K562 (cell line): ENCODE measurements at regions of chr13 and their contacts with region 1.

Region 1: DNA sequence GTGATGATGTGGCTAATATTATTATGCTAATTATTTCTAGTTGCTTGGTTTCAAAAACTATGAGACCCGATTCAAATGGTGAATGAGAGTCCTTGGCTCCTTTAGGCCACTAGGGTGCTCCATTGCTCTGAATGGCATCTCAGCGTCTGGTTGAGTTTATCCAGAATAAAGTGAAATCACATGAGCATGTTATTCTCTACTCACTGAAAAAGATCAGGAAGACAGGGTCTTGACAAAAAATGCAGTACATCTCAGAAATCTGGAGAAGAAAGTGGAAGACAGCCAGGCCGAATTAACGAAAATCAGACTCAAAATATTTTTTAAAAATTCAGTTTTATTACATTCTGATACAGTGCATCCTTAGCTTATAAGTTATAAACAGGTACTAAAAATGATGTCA is 516.2 kb downstream of the MYO16 start:
- DNase-seq: peak; percentile 8 to 18 (median 14)
- ATAC-seq: peak; percentile 57; the same call in 1 of the 3 replicates
- H3K4me3 ChIP-seq: no peak overlapping the region
- H3K27ac ChIP-seq: no peak overlapping the region
- H3K4me1 ChIP-seq: no peaks in the 10 kb centered on the region
- H3K27me3 ChIP-seq: no peaks in the 10 kb centered on the region
- CTCF ChIP-seq: peak; percentile 33 to 41 (median 38); a peak in 4 of 6 replicates
- EP300 ChIP-seq: no peak
- POLR2A ChIP-seq: no peak
- RAD21 ChIP-seq: peak; percentile 10 to 47; a peak in 2 of 4 replicates

Region 2: DNA sequence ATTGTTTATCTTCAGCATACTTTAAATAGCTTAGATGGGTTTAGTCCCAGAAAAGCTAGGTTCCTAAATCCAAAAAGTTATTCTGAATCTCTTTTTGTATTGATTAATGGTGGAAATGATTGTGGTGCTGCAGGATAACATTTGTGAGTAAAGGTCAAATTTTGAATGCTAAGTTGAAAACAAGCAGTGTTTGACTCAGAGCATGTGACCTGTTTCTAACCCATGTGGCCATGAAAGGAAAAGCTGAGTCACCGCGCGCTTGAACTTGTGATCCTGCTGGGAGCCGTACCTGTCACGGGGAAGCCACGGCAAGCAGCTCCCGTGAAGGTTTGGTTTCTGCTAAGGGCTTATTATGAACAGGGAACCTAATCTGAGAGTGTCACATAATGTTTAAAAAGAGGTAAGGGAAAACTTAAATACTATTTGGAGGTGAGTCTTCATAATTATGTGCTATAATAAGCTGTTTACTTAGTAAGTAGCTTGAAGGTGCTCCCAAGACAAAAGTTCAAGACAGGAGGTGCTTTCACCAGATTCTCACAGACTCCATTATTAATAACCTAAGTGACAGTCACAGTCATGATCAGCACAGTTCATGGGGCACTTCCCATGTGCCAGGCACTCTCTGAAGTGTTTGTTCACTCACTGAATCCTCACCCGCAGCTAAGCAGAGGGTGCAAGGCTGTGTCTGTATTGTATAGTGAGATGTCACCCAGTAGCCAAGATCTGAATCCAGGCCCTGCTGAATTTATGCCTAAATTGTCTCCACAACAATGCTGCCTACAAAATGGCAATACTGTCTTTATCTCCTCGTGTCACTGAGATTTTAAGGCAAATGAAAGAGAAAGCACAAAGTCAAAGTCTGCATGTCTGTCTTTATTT is 229.8 kb before region 1 on chr13:
- CTCF ChIA-PET with region 1: no interaction called
- POLR2A ChIA-PET with region 1: no interaction called
- in situ Hi-C with region 1: no loop called
- intact Hi-C with region 1: no loop called
- DNase-seq: peak; percentile 51 to 89 (median 56)
- ATAC-seq: peak; percentile 97
- H3K4me3 ChIP-seq: no peak overlapping the region
- H3K27ac ChIP-seq: peak overlapping the region; percentile 84
- H3K4me1 ChIP-seq: peaks cover under 1 to 17% of the 10 kb centered on the region in 2 experiments; a peak in 3 of 5 replicates
- H3K27me3 ChIP-seq: no peaks in the 10 kb centered on the region
- CTCF ChIP-seq: no peak
- EP300 ChIP-seq: peak; percentile 39; the same call in 1 of the 2 replicates
- POLR2A ChIP-seq: no peak
- RAD21 ChIP-seq: no peak

Region 3: GRCh38 chr13:109113427-109113826 is 32.2 kb before region 1 on chr13:
- CTCF ChIA-PET with region 1: no interaction called
- POLR2A ChIA-PET with region 1: no interaction called
- in situ Hi-C with region 1: no loop called
- intact Hi-C with region 1: no loop called
- DNase-seq: no peak
- ATAC-seq: no peak
- H3K4me3 ChIP-seq: no peak overlapping the region
- H3K27ac ChIP-seq: no peak overlapping the region
- H3K4me1 ChIP-seq: no peaks in the 10 kb centered on the region
- H3K27me3 ChIP-seq: no peaks in the 10 kb centered on the region
- CTCF ChIP-seq: no peak
- EP300 ChIP-seq: no peak
- POLR2A ChIP-seq: no peak
- RAD21 ChIP-seq: no peak

Region 4: DNA sequence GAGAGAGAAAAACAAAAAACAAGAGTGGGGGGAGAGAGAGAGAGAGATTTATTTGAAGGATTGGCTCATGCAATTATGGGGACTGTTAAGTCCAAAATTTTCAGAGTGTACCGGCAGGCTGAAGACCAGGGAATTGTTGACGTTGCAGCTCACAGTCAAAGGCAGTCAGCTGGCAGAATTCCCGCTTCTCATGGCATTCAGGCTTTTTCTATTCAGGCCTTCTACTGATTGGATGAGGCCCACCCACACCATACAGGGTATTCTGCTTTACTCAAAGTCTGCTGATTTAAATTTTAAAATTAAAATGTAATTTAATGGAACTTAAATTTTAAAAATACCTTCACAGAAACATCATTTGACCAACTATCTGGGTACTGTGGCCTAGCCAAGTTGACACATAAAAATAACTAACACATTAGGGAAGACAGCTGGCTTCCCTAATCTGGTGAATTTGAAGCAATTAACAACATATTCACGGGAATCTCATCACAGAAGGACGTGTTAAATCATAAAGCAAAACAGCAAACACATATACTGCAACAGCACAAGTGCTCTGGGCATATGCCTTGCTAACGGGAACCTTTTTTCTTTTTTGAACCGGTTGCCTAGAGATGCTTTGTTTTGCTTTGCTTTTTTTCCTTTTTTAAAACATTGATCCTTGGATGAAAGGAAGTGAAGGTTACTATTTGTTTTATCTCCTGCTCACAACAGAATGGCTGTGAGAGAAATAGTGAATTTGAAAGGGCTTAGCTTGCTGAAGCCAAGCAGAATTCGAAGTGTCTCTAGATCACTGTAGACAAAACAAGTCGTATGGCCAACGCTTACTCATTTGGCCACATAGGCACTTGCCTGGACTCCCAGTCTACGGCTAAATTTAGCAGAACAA is 135.6 kb after region 1 on chr13:
- CTCF ChIA-PET with region 1: no interaction called
- POLR2A ChIA-PET with region 1: no interaction called
- in situ Hi-C with region 1: no loop called
- intact Hi-C with region 1: loop called (anchors 10 kb)
- DNase-seq: no peak
- ATAC-seq: no peak
- H3K4me3 ChIP-seq: no peak overlapping the region
- H3K27ac ChIP-seq: no peak overlapping the region
- H3K4me1 ChIP-seq: no peaks in the 10 kb centered on the region
- H3K27me3 ChIP-seq: no peaks in the 10 kb centered on the region
- CTCF ChIP-seq: no peak
- EP300 ChIP-seq: no peak
- POLR2A ChIP-seq: no peak
- RAD21 ChIP-seq: no peak

Region 5: DNA sequence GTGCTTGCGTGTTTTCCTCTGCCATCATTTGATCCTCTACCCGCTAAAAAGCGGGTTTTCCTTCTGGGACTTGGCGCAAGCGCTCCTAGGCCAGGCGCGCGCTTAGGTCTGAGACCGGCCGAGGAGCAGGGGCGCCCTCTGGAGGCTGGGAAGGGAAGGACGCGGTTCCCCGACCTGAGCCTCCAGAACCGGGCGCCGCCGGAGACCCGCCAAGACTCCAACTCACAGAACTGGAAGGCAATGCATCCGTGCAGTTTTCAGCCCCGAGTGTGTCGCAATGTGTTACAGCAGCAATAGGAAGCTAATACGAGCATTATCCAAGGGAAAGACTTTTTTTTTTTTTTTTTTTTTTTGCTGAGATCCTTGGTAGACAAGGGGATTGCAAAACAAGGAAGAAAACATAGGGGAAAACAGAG is 970.4 kb after region 1 on chr13:
- CTCF ChIA-PET with region 1: no interaction called
- POLR2A ChIA-PET with region 1: no interaction called
- in situ Hi-C with region 1: no loop called
- intact Hi-C with region 1: loop called (anchors 10 kb)
- DNase-seq: peak; percentile 67 to 74 (median 72)
- ATAC-seq: peak; percentile 98
- H3K4me3 ChIP-seq: no peak overlapping the region
- H3K27ac ChIP-seq: no peak overlapping the region
- H3K4me1 ChIP-seq: peaks cover 0 to 3% of the 10 kb centered on the region in 2 experiments; a peak in 1 of 5 replicates
- H3K27me3 ChIP-seq: peaks cover 0 to 18% of the 10 kb centered on the region in 2 experiments; a peak in 4 of 5 replicates
- CTCF ChIP-seq: peak; percentile 72 to 79 (median 79)
- EP300 ChIP-seq: no peak
- POLR2A ChIP-seq: no peak
- RAD21 ChIP-seq: peak; percentile 63 to 78